ENCODE measurements at regions of chr1 and their contacts with region 1.

Region 1: GRCh38 chr1:101262630-101263348 is 26.0 kb downstream of the S1PR1 start:
- DNase-seq: peak in 7 of 9 donors; percentile 38 to 71 (median 63)
- ATAC-seq: peak; percentile 60
- H3K4me3 ChIP-seq: peak overlapping the region; percentile 31
- H3K4me3 Mint-ChIP-seq: peak overlapping the region; percentile 76 to 88 (median 82)
- H3K27ac ChIP-seq: peak overlapping the region; percentile 37
- H3K27ac Mint-ChIP-seq: peak overlapping the region; percentile 79 to 97 (median 90)
- H3K4me1 ChIP-seq: peaks cover 87 to 91% of the 10 kb centered on the region in 2 donors
- H3K4me1 Mint-ChIP-seq: peaks cover 68 to 96% (median 85%) of the 10 kb centered on the region in 7 donors
- H3K27me3 ChIP-seq: no peaks in the 10 kb centered on the region
- H3K27me3 Mint-ChIP-seq: no peaks in the 10 kb centered on the region

Region 2: DNA sequence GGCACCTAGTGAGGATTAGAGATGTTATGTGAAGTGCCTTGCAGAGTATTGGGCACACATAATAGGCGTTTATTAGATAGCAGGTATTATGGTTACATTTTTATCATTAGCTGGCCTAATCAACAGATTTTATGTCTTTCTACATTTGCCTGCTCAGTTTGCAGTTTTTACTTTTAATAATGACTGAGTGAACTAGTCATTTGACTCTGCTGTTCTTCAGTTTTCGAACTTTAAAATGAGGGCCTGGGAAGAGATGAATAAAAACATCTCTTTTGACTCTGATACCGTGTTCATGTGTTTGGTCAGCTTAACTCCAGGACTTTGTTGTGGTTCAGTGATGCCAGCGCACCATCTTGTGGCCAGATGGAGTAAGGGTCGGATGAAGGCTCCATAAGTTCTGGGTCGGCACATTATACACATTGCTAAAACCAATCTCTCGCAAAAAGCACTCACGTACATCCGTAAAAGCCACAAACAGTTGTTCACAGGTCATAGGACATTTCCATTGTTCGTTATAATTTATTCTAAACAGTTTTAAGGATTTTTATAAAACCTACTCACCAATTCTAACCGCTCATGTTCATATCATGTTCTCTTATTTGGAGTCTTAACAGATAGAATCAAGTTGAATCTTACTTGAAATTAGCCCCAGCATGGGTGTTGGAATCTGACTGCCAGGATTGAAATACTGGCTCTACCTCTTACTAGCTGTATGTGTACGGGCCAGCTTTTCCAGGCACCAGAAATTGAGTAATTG is 803.3 kb before region 1 on chr1:
- CTCF ChIA-PET with region 1: no interaction called
- POLR2A ChIA-PET with region 1: no interaction called
- intact Hi-C with region 1: no loop called
- DNase-seq: peak; percentile 34 to 62 (median 53)
- ATAC-seq: peak; percentile 87
- H3K4me3 ChIP-seq: no peak overlapping the region
- H3K4me3 Mint-ChIP-seq: peak overlapping the region in 8 of 10 donors; percentile 15 to 65 (median 40)
- H3K27ac ChIP-seq: no peak overlapping the region
- H3K27ac Mint-ChIP-seq: peak overlapping the region; percentile 11 to 93 (median 74)
- H3K4me1 ChIP-seq: peaks cover 18 to 22% of the 10 kb centered on the region in 2 donors
- H3K4me1 Mint-ChIP-seq: peaks cover 21 to 81% (median 59%) of the 10 kb centered on the region in 7 donors
- H3K27me3 ChIP-seq: no peaks in the 10 kb centered on the region
- H3K27me3 Mint-ChIP-seq: no peaks in the 10 kb centered on the region

Region 3: GRCh38 chr1:101247404-101248287 is 15.1 kb before region 1 on chr1:
- CTCF ChIA-PET with region 1: interaction called, 5 read pairs
- POLR2A ChIA-PET with region 1: interaction called, 101 read pairs
- intact Hi-C with region 1: loop called in 1 of 2 experiments (anchors 1 kb)
- DNase-seq: no peak
- ATAC-seq: peak; percentile 54
- H3K4me3 ChIP-seq: no peak overlapping the region
- H3K4me3 Mint-ChIP-seq: peak overlapping the region in 9 of 10 donors; percentile 3 to 77 (median 42)
- H3K27ac ChIP-seq: peak overlapping the region; percentile 25
- H3K27ac Mint-ChIP-seq: peak overlapping the region in 8 of 9 donors; percentile 28 to 100 (median 73)
- H3K4me1 ChIP-seq: peaks cover 14 to 56% of the 10 kb centered on the region in 2 donors
- H3K4me1 Mint-ChIP-seq: peaks cover 26 to 93% (median 79%) of the 10 kb centered on the region in 7 donors
- H3K27me3 ChIP-seq: no peaks in the 10 kb centered on the region
- H3K27me3 Mint-ChIP-seq: no peaks in the 10 kb centered on the region

Region 4: DNA sequence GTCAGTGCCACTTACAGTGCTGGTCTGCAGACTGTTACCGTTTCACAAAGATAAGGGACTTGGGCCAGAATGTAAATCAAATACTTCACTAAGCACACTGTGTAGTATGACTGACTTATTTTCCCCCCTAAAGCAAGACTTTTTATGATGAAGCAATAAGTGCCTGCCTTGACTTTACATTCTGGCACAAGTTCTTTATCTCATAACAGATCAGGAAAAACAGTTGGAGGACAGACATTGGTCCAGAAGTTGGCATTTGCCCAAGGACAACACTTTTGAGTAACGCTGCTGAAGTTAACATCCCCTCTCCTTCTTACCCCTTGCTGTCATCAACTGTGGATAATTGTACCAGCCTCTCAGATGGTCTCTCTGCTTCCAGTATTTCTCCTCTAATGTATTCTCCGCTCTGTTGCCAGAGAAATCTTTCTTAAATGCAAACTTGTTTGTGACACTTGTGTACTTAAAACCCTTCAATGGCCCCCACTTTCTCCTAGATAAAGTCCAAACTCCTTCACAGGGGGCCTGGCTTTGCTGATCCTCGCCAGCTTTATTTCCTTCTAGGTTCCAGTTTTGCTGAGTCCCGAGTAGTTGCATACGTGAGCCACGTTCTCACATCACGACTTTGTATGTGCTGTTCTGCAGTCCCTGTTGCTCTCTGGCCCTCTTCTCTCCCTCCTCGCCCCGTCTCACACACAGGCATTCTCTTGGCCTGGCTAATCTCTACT is 19.7 kb after region 1 on chr1:
- CTCF ChIA-PET with region 1: interaction called, 11 read pairs
- POLR2A ChIA-PET with region 1: interaction called, 224 read pairs
- intact Hi-C with region 1: loop called (anchors 1 to 2 kb)
- DNase-seq: no peak
- ATAC-seq: no peak
- H3K4me3 ChIP-seq: no peak overlapping the region
- H3K4me3 Mint-ChIP-seq: peak overlapping the region in 7 of 10 donors; percentile 11 to 94 (median 84)
- H3K27ac ChIP-seq: peak overlapping the region; percentile 77
- H3K27ac Mint-ChIP-seq: peak overlapping the region in 8 of 9 donors; percentile 85 to 99 (median 98)
- H3K4me1 ChIP-seq: peaks cover 92 to 95% of the 10 kb centered on the region in 2 donors
- H3K4me1 Mint-ChIP-seq: peaks cover 67 to 96% (median 95%) of the 10 kb centered on the region in 7 donors
- H3K27me3 ChIP-seq: no peaks in the 10 kb centered on the region
- H3K27me3 Mint-ChIP-seq: peaks cover 0 to 2% (median 0%) of the 10 kb centered on the region in 5 donors

Measured in naive thymus-derived CD4-positive, alpha-beta T cell (primary cell).